ENCODE measurements at regions of chr16 and their contacts with region 1.

Region 1: GRCh38 chr16:67672739-67673662 is 6.4 kb downstream of the C16orf86 start:
- DNase-seq: peak; percentile 72 to 82
- ATAC-seq: peak; percentile 49 to 65 (median 55)
- H3K4me3 ChIP-seq: no peak overlapping the region
- H3K27ac ChIP-seq: peak overlapping the region; percentile 69
- H3K4me1 ChIP-seq: peaks cover 14% of the 10 kb centered on the region
- H3K27me3 ChIP-seq: no peaks in the 10 kb centered on the region
- CTCF ChIP-seq: peak; percentile 71

Region 2: GRCh38 chr16:67719048-67719777 is 46.2 kb after region 1 on chr16 and contains the start of gene GFOD2:
- intact Hi-C with region 1: loop called (anchors 5 kb)
- DNase-seq: peak; percentile 96 to 99
- ATAC-seq: peak; percentile 97 to 99 (median 98)
- H3K4me3 ChIP-seq: peak within 1 kb of the TSS; percentile 99
- H3K27ac ChIP-seq: peak within 1 kb of the TSS; percentile 96
- H3K4me1 ChIP-seq: peaks cover 22% of the 10 kb centered on the region
- H3K27me3 ChIP-seq: no peaks in the 10 kb centered on the region
- CTCF ChIP-seq: no peak
- total RNA-seq, gene GFOD2: 8.0 to 11.3 (median 9.0) TPM

Region 3: DNA sequence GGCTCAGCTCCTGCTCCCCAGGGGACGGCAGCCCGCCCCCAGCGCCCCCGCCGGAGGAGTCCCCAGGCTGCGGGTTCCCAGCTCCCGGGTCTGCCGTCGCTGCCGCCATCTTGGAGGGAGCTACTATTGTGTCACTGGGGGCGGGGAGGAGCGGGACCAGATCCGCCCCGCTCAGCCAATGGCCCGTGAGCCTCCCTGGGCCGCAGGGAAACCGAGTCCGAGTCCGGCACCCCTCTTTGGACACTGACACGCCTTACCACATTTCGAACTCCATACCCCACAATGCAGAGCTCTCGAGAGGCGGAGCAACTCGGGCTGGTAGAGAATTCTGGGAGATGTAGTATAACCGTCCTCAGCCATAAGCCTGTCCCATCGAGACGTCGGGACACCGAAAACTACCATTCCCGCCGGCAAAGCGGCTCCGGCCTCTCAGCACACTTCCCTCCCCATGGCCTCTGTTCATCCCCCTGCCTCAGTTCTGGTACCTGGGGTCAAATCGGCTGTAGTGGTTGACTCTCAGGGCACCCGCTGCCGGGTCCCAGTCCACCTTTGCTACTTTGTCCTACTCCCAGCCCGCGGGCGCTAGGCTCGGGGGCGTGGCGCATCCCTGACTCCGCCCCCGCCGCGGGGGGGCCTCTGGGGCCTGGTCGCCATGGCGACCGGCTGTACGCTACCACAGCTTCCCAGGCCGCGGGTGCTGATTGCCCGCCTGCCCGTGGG is 133.6 kb after region 1 on chr16 and contains the starts of genes RANBP10 and TSNAXIP1:
- intact Hi-C with region 1: loop called (anchors 5 kb)
- DNase-seq: peak; percentile 97 to 99
- ATAC-seq: peak; percentile 93 to 98 (median 96)
- H3K4me3 ChIP-seq: peak within 1 kb of the TSS; percentile 88
- H3K27ac ChIP-seq: peak within 1 kb of the TSS; percentile 91
- H3K4me1 ChIP-seq: peaks cover 22% of the 10 kb centered on the region
- H3K27me3 ChIP-seq: no peaks in the 10 kb centered on the region
- CTCF ChIP-seq: no peak
- total RNA-seq, gene RANBP10: 17.6 to 27.9 (median 25.2) TPM
- total RNA-seq, gene TSNAXIP1: 0.29 to 0.88 (median 0.60) TPM

Region 4: GRCh38 chr16:67928561-67929364 is 255.8 kb after region 1 on chr16:
- intact Hi-C with region 1: loop called (anchors 2 to 10 kb)
- DNase-seq: peak; percentile 75 to 89
- ATAC-seq: peak; percentile 64 to 79 (median 72)
- H3K4me3 ChIP-seq: no peak overlapping the region
- H3K27ac ChIP-seq: no peak overlapping the region
- H3K4me1 ChIP-seq: peaks cover 36% of the 10 kb centered on the region
- H3K27me3 ChIP-seq: no peaks in the 10 kb centered on the region
- CTCF ChIP-seq: peak; percentile 84

Region 5: DNA sequence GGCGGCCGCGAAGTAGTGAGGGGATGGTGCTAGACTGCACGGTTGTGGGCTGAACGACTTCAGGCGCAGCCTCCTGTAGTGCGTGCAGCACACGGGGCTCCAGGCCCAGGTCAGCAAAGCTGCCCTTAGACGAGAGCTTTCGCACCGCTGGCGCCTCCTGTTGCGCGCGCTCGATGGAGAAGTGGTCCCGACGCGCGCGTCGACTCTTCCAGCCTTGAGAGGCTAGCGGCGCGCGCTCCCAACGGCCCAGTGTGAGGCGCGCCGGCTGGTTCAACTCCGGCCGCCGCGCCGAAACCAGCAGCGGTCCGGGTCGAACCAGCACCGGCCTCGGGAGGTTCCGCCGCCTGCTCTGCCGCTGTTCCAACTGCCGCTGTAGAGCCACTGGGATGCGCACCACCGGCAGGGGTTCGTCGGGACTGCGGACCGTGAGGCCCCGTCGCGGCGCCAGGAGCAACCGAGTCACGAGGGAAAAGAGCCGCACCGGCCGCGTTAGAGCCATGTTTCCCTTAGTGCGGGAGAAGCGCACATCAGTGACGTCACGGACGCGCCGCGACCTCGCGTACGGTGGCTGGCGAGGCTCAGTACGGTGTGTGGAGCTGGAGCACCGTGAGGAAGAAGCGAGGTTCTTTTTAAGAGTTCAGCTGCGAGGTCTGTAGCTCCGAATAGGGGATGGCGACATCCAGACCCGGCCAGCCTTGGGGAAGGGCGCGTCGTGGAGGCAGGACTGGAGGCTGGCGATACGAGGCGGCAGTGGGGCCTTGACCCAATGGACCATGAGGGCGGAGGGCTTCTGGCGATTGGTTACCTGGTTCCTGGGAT is 349.9 kb after region 1 on chr16 and contains the starts of genes DDX28 and DUS2:
- intact Hi-C with region 1: loop called in 1 of 2 experiments (anchors 10 kb)
- DNase-seq: peak; percentile 94 to 97
- ATAC-seq: peak; percentile 97 to 99 (median 97)
- H3K4me3 ChIP-seq: peak within 1 kb of the TSS; percentile 99
- H3K27ac ChIP-seq: peak within 1 kb of the TSS; percentile 94
- H3K4me1 ChIP-seq: peaks cover 24% of the 10 kb centered on the region
- H3K27me3 ChIP-seq: no peaks in the 10 kb centered on the region
- CTCF ChIP-seq: no peak
- total RNA-seq, gene DDX28: 10.0 to 19.3 (median 14.4) TPM
- total RNA-seq, gene DUS2: 7.0 to 10.5 (median 9.8) TPM

Measured in psoas muscle (tissue), 8 donors.